Dendritic cell treated with granulocyte-macrophage colony-stimulating factor and Interleukin-4, amounts not matched to agents 40 ng/mL and 50 ng/mL, for 4 days (primary cell): ENCODE measurements at regions of chr1 and their contacts with region 1.

Region 1: GRCh38 chr1:107750358-107750959 is 214.5 kb downstream of the VAV3 start:
- H3K4me3 Mint-ChIP-seq: no peak overlapping the region
- H3K27ac Mint-ChIP-seq: no peak overlapping the region
- H3K4me1 Mint-ChIP-seq: no peaks in the 10 kb centered on the region
- H3K27me3 Mint-ChIP-seq: no peaks in the 10 kb centered on the region

Region 2: DNA sequence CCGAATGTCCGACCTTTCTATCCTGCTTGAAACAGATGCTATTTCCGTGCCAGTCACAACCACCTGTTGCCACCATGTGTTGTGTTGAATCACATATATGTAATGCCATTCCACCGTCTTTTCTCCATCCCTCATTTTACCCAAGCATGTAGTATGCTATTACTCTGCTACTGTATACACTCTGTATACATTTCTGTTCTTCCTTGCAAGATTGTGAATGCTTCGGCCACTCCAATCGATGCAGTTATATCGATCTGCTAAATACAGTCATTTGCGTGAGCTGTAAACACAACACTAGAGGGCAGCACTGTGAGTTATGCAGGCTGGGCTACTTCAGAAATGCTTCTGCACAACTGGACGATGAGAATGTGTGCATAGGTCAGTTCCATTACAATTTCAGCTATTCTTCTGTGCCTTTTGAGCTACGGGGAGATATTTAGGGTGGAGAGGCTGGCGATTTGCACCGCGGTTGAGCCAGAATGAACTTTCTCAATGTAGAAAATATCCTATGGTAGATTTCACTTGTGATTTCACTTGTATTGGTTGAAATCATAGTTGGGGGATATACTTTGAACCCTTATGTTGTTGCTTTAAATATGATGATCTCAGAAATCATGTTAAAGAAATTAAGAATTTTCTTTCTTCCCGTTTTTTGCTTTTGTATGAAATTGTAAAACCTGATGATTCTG is 319.8 kb before region 1 on chr1:
- intact Hi-C with region 1: loop called (anchors 1 kb)
- H3K4me3 Mint-ChIP-seq: no peak overlapping the region
- H3K27ac Mint-ChIP-seq: no peak overlapping the region
- H3K4me1 Mint-ChIP-seq: no peaks in the 10 kb centered on the region
- H3K27me3 Mint-ChIP-seq: no peaks in the 10 kb centered on the region

Region 3: GRCh38 chr1:107590900-107591633 is 159.4 kb before region 1 on chr1:
- intact Hi-C with region 1: loop called (anchors 10 kb)
- H3K4me3 Mint-ChIP-seq: no peak overlapping the region
- H3K27ac Mint-ChIP-seq: peak overlapping the region; percentile 58
- H3K4me1 Mint-ChIP-seq: peaks cover 32% of the 10 kb centered on the region
- H3K27me3 Mint-ChIP-seq: no peaks in the 10 kb centered on the region

Region 4: GRCh38 chr1:107782217-107782845 is 31.9 kb after region 1 on chr1:
- intact Hi-C with region 1: no loop called
- H3K4me3 Mint-ChIP-seq: no peak overlapping the region
- H3K27ac Mint-ChIP-seq: no peak overlapping the region
- H3K4me1 Mint-ChIP-seq: peaks cover 25% of the 10 kb centered on the region
- H3K27me3 Mint-ChIP-seq: no peaks in the 10 kb centered on the region